ENCODE measurements at regions of chr11 and their contacts with region 1.

Region 1: GRCh38 chr11:57751676-57752253 is at the start of gene BTBD18:
- DNase-seq: no peak
- H3K4me3 ChIP-seq: no peak within 1 kb of the TSS
- CTCF ChIP-seq: peak; percentile 52

Region 2: GRCh38 chr11:57741132-57742086 is 10.4 kb before region 1 on chr11 and contains the start of gene SELENOH:
- CTCF ChIA-PET with region 1: interaction called, 17 read pairs
- POLR2A ChIA-PET with region 1: interaction called, 8 read pairs
- DNase-seq: peak; percentile 78
- H3K4me3 ChIP-seq: peak within 1 kb of the TSS; percentile 93
- CTCF ChIP-seq: no peak

Region 3: GRCh38 chr11:57792060-57792541 is 40.3 kb after region 1 on chr11:
- CTCF ChIA-PET with region 1: interaction called, 10 read pairs
- POLR2A ChIA-PET with region 1: no interaction called
- DNase-seq: no peak
- H3K4me3 ChIP-seq: no peak overlapping the region
- CTCF ChIP-seq: no peak

Region 4: DNA sequence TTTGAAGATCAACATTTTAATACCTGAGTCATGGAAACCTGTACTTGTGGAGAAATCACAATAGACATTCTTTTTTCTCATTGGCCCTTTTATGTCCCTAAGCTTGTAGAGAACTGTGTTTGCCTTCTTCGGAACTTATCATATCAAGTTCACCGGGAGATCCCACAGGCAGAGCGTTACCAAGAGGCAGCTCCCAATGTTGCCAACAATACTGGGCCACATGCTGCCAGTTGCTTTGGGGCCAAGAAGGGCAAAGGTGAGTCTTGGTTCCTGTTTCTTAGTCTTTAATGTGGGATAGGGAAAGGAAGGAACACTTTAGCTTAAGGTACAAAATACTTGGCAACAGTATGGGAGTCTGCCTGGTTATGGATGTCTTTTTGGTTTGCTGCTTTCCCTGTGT is 54.0 kb after region 1 on chr11:
- CTCF ChIA-PET with region 1: interaction called, 315 read pairs
- POLR2A ChIA-PET with region 1: interaction called, 3 read pairs
- DNase-seq: no peak
- H3K4me3 ChIP-seq: no peak overlapping the region
- CTCF ChIP-seq: no peak